Activated naive CD4-positive, alpha-beta T cell treated with anti-CD3 and anti-CD28 coated beads for 36 hours (primary cell): ENCODE measurements at regions of chr2 and their contacts with region 1.

Region 1: GRCh38 chr2:158024288-158024898 is 77.3 kb upstream of the UPP2 start:
- DNase-seq: peak; percentile 76
- H3K4me3 Mint-ChIP-seq: no peak overlapping the region
- H3K27ac Mint-ChIP-seq: no peak overlapping the region
- H3K4me1 Mint-ChIP-seq: peaks cover 7% of the 10 kb centered on the region
- H3K27me3 Mint-ChIP-seq: no peaks in the 10 kb centered on the region

Region 2: DNA sequence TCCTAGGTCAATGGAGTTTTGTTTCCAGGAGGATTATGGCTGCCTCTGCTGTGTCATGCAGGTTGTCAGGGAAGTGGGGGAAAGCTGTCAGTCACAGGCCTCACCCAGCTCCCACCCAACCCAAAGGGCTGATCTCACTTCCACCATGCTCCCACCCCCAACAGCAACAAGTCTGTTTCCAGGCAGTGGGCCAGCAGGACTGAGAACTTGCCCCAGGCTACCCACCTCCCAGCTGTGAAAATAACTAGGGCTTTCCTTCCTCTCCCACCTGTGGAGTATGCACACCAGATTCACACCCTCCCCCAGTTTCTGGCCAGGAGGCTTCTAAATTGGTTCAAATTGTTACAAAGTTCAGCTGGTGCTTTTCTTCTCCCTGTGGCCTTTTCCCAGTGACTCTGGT is 52.7 kb before region 1 on chr2:
- CTCF ChIA-PET with region 1: no interaction called
- intact Hi-C with region 1: no loop called
- DNase-seq: no peak
- H3K4me3 Mint-ChIP-seq: no peak overlapping the region
- H3K27ac Mint-ChIP-seq: no peak overlapping the region
- H3K4me1 Mint-ChIP-seq: no peaks in the 10 kb centered on the region
- H3K27me3 Mint-ChIP-seq: no peaks in the 10 kb centered on the region

Region 3: DNA sequence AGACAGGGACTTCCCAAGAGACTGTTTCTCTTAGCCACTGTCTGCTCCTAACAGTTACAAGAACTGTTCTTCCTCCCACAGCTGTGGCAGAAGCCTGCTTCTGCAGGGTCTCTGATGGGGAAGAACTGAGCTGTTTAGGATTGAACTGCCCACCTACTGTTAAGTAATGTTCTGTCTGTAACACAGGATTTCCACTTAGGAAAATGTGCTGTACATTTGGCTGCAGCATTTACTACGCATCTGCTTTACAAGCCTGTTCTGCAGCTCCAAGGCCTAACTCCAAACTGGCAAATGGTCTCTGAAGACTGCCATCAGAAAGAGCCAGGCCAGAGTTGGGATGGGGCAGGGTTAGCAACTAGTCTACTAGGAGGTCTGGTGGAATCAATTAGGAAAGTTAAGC is 10.5 kb before region 1 on chr2:
- CTCF ChIA-PET with region 1: interaction called, 11 read pairs
- intact Hi-C with region 1: no loop called
- DNase-seq: no peak
- H3K4me3 Mint-ChIP-seq: no peak overlapping the region
- H3K27ac Mint-ChIP-seq: no peak overlapping the region
- H3K4me1 Mint-ChIP-seq: peaks cover 20% of the 10 kb centered on the region
- H3K27me3 Mint-ChIP-seq: no peaks in the 10 kb centered on the region

Region 4: DNA sequence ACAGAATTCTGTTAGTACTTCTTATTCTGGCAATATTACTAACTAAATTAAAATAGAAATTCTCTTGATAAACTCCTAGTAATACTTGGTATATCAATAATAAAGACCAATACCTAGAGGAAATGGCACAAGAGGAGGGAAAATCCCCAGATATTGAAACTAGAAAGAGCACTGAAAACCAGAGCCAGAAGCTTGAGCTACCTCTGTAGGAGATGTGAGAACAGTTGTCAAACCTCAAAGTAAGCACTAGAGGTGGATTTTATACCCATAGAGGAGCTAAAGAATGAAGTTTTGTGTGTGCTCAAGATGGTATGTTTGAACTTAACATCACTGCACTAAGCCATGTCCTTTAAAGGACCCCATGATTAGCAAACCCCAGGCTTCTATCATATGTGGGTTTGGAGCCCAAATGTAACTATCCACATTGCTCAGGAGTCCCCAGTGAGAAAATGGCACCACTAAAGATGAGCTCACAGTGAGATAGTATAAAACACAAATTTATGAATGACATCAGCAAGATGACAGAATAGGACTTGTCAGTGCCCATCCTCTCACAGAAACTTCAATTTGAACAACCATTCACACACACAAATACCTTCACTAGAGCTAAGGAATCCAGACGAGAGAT is 554.4 kb after region 1 on chr2:
- CTCF ChIA-PET with region 1: no interaction called
- intact Hi-C with region 1: no loop called
- DNase-seq: no peak
- H3K4me3 Mint-ChIP-seq: no peak overlapping the region
- H3K27ac Mint-ChIP-seq: no peak overlapping the region
- H3K4me1 Mint-ChIP-seq: peaks cover 3% of the 10 kb centered on the region
- H3K27me3 Mint-ChIP-seq: no peaks in the 10 kb centered on the region